Activated T-helper 1 cell treated with anti-CD3 and anti-CD28 coated beads, Interleukin-12 subunit alpha, Interleukin-12 subunit beta, Interleukin-2, Interleukin-4 antibody, amounts not matched to agents 30 ng/mL and 10 ng/mL and 1 ng/mL, durations not matched to agents 14 hours and 24 hours and 36 hours (primary cell): ENCODE measurements at regions of chr12 and their contacts with region 1.

Region 1: DNA sequence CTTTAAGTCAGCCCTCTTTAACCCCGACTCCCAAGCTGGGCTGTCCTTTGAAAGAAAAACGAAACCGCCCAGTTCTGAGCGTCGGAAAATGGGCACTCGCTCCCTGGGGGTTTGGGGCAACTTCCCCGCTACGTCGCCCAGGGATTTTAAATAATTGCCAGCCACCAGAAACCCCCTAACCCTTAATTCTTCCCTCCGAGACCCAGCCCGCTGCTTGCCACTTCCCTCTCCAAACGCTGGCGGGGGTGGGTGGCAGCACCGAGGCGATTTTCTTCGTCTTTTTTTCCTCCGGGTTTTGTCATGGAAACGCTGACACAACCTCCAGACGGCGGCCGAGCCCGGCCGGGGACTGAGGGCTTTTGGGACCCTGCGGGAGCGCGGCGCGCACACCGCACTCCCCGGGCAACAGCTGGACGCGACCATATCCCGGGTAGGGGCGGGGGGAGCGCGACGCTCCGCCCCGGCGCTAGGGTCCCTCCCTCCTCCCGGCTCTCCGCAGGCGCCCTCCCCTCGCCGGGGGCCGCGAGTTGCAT is at the start of gene CHST11:
- DNase-seq: peak; percentile 77
- H3K4me3 Mint-ChIP-seq: peak within 1 kb of the TSS; percentile 99
- H3K27ac Mint-ChIP-seq: peak within 1 kb of the TSS; percentile 99
- H3K4me1 Mint-ChIP-seq: peaks cover 43% of the 10 kb centered on the region
- H3K27me3 Mint-ChIP-seq: no peaks in the 10 kb centered on the region
- total RNA-seq, gene CHST11: 69.8 and 70.7 TPM in 2 replicates

Region 2: DNA sequence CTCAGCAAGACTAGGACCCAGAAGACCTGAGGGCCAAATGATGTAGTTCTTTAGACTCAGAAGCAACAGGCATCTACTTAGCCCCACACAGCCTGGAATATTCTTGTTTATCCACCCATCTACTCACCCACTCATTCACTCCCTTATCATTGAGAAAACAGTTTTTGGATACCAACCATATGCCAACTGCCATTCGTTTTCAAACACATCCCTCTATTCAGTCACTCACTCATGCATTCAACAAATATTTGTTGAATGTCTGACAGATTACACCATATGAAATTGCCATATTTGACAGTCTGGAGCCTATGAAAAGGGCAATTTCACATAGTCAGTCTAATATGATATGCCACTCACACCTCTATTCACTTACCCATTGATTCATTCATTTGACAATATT is 718.6 kb before region 1 on chr12:
- intact Hi-C with region 1: no loop called
- DNase-seq: no peak
- H3K4me3 Mint-ChIP-seq: no peak overlapping the region
- H3K27ac Mint-ChIP-seq: no peak overlapping the region
- H3K4me1 Mint-ChIP-seq: no peaks in the 10 kb centered on the region
- H3K27me3 Mint-ChIP-seq: peaks cover 4% of the 10 kb centered on the region

Region 3: DNA sequence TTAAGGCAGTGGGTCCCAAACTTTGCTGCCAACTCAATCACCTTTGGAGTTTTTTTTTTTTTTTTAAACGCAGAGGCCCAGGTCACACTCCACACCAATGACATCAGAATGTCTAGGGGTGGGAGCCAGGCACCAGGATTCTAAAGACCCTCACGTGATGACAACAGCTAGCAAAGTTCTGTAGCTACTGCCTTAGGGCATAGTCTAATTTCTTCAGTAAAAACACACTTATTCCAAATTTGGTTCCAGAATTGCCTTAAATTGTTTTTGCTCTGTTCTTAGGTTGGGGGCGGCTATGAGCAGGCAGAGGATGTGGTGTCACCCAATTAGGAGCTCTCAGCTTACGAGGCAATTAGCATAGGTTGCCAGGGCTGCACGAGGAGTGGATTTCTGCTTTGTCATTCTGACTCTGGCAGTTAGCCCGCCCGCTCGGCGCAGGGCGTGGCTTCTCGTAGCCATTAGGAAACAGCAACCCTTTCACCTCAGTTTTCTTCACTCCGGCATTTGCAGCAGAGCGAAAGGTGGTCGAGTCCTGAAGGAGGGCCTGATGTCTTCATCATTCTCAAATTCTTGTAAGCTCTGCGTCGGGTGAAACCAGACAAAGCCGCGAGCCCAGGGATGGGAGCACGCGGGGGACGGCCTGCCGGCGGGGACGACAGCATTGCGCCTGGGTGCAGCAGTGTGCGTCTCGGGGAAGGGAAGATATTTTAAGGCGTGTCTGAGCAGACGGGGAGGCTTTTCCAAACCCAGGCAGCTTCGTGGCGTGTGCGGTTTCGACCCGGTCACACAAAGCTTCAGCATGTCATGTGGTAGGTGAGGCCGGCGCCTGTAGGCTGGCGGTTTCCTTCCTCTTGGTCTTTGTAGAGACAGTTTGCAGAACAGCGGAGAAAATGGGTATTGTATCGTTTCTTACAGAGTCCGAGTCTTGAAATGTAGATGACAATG is 169.7 kb before region 1 on chr12:
- intact Hi-C with region 1: loop called (anchors 1 kb)
- DNase-seq: peak; percentile 90
- H3K4me3 Mint-ChIP-seq: peak overlapping the region; percentile 98
- H3K27ac Mint-ChIP-seq: peak overlapping the region; percentile 99
- H3K4me1 Mint-ChIP-seq: peaks cover 27% of the 10 kb centered on the region
- H3K27me3 Mint-ChIP-seq: no peaks in the 10 kb centered on the region

Region 4: GRCh38 chr12:104494137-104494792 is 37.8 kb after region 1 on chr12:
- intact Hi-C with region 1: loop called (anchors 1 kb)
- DNase-seq: no peak
- H3K4me3 Mint-ChIP-seq: peak overlapping the region; percentile 64
- H3K27ac Mint-ChIP-seq: peak overlapping the region; percentile 89
- H3K4me1 Mint-ChIP-seq: peaks cover 92% of the 10 kb centered on the region
- H3K27me3 Mint-ChIP-seq: no peaks in the 10 kb centered on the region

Region 5: DNA sequence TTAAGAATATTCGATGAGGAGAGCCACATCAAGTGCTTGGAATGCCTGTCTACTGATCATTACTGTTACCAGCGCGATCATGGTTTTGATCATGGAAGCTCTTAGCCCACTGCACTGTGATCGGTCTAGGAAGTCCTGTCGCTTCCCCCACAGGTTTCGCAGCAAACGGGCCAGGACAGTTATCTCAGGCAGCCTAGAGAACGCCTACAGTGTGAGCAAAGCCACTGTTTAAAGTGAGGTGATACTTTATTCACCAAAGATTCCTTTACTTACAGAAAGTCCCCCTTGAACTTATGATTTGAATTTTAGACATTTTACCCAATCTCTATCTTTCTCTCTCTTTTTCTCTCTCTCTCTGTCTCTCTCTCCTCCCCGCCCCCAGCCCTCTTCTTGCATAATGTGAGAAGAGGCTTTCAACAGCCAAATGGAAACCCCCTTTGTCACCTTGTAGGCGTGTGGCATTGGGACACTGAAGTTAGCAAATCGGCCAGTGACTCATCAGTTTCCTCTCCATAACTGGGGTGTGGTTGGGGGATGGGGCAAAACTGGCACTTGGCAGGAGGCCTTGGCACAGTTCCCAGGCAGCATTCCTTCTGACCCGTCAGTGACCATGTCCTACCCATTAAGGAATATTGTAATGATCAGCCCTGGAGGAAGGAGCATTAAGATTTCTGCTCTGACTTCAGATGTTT is 215.1 kb after region 1 on chr12:
- intact Hi-C with region 1: loop called (anchors 1 kb)
- DNase-seq: peak; percentile 82
- H3K4me3 Mint-ChIP-seq: peak overlapping the region; percentile 50
- H3K27ac Mint-ChIP-seq: peak overlapping the region; percentile 91
- H3K4me1 Mint-ChIP-seq: peaks cover 82% of the 10 kb centered on the region
- H3K27me3 Mint-ChIP-seq: no peaks in the 10 kb centered on the region

Region 6: DNA sequence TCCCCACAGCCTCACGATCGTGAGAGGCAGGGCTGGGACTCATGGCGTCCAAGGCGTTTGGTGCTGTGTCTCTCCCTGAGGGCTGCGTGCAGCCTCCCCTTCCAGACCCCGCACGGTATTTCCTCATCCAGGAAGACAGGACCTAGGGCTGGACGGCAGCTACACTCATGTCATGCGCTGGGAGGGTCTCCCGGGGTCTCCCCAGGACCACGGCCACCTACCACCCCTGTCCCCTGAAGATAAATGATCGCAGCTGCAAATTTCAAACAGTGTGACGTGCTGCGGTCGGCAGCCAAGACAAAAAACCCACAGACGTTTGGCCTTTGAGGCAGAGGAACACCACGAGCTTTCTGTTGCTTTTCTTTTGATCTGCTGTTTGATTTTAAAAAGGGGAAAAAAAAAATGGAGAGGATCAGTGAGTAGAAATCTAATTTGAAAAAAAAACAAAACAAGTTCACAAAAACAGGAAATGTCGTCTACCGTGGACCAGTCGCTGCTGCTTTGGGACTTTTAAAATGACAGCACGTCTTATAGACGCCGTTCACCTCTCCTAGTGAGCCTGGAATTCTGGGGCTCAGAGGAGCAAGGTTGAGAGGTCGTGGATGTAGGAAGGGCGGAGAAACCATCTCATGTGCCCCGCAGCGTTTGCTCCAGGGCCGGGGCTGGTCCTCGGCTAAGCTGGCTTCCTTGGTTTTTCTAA is 264.0 kb after region 1 on chr12:
- intact Hi-C with region 1: loop called (anchors 1 kb)
- DNase-seq: peak; percentile 69
- H3K4me3 Mint-ChIP-seq: peak overlapping the region; percentile 81
- H3K27ac Mint-ChIP-seq: peak overlapping the region; percentile 94
- H3K4me1 Mint-ChIP-seq: peaks cover 78% of the 10 kb centered on the region
- H3K27me3 Mint-ChIP-seq: no peaks in the 10 kb centered on the region

Region 7: GRCh38 chr12:104930388-104931326 is 474.2 kb after region 1 on chr12:
- intact Hi-C with region 1: loop called (anchors 1 kb)
- DNase-seq: peak; percentile 47
- H3K4me3 Mint-ChIP-seq: peak overlapping the region; percentile 11
- H3K27ac Mint-ChIP-seq: peak overlapping the region; percentile 87
- H3K4me1 Mint-ChIP-seq: peaks cover 38% of the 10 kb centered on the region
- H3K27me3 Mint-ChIP-seq: peaks cover 2% of the 10 kb centered on the region